Activated CD8-positive, alpha-beta T cell treated with anti-CD3 and anti-CD28 coated beads, Interleukin-2, amount 10 ng/mL, durations not matched to agents 7 days and 5 days (primary cell): ENCODE measurements at regions of chr2 and their contacts with region 1.

Region 1: GRCh38 chr2:224927646-224928173 is 114.6 kb downstream of the DOCK10 start:
- DNase-seq: peak; percentile 91
- ATAC-seq: peak; percentile 75
- H3K4me3 Mint-ChIP-seq: peak overlapping the region; percentile 64
- H3K27ac Mint-ChIP-seq: peak overlapping the region; percentile 100
- H3K4me1 Mint-ChIP-seq: peaks cover 99% of the 10 kb centered on the region
- H3K27me3 Mint-ChIP-seq: no peaks in the 10 kb centered on the region

Region 2: DNA sequence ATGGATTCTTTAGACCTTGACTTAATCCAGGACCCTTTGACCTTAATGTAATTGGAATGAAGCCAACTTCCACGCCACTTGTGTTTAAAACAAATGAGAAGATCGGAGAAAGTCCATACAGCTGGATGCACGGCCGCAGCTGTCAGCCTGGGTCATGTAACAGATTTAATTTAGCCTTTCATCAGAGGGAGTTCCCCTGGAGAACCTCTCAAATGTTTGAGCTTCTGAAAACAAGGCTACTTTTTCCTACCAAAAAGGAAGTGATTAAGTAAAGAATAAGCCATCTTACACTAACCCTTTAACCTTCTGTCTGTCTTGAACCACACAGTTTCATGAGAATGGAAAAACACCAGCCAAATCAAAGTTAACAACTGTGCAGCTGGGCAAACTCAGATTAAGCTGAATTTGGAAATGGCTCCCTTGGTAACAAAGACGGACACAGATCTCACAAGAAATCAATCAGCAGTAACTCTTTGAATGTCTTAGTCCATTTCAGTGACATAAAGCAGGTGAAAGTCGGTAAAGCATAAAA is 11.0 kb after region 1 on chr2:
- CTCF ChIA-PET with region 1: interaction called, 137 read pairs
- POLR2A ChIA-PET with region 1: interaction called, 221 read pairs
- DNase-seq: no peak
- ATAC-seq: peak; percentile 62
- H3K4me3 Mint-ChIP-seq: peak overlapping the region; percentile 63
- H3K27ac Mint-ChIP-seq: peak overlapping the region; percentile 83
- H3K4me1 Mint-ChIP-seq: peaks cover 78% of the 10 kb centered on the region
- H3K27me3 Mint-ChIP-seq: no peaks in the 10 kb centered on the region

Region 3: DNA sequence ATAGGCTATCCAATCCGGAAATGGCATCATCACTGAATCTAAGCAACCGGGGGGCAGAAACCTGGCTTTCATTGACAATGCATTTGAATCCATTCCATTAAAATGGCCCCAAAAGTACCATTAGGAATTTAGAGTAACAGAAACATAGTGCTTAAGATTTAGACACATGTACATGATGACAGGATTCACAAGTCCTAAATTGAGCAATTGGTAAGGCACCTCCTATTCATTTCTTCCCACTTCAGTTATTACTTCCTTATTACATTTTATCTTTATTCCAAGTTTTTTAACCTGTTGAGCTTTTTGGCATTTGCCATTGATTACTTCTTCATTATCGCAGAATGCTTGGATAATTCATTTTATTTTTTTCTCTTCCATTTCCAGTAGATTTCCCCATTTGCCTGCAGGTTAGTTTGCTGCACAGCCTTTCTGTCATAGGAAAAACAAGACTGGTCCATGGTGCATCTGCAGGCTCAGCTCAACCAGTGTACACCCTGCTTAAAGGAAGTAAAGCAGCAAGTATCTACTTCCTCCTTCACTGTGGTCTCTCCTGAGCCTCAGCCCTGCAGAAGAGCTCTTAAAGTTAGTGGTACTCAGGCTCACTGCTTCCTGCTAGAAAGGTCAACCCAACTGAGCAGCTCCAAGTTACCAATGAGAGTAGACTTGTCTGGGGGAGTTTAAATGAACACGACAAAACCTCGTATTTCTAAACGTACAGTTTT is 25.4 kb after region 1 on chr2:
- CTCF ChIA-PET with region 1: interaction called, 137 read pairs
- POLR2A ChIA-PET with region 1: interaction called, 221 read pairs
- DNase-seq: peak; percentile 76
- ATAC-seq: peak; percentile 94
- H3K4me3 Mint-ChIP-seq: peak overlapping the region; percentile 67
- H3K27ac Mint-ChIP-seq: peak overlapping the region; percentile 89
- H3K4me1 Mint-ChIP-seq: peaks cover 88% of the 10 kb centered on the region
- H3K27me3 Mint-ChIP-seq: no peaks in the 10 kb centered on the region